A549 (cell line): ENCODE measurements at regions of chr17 and their contacts with region 1.

Region 1: DNA sequence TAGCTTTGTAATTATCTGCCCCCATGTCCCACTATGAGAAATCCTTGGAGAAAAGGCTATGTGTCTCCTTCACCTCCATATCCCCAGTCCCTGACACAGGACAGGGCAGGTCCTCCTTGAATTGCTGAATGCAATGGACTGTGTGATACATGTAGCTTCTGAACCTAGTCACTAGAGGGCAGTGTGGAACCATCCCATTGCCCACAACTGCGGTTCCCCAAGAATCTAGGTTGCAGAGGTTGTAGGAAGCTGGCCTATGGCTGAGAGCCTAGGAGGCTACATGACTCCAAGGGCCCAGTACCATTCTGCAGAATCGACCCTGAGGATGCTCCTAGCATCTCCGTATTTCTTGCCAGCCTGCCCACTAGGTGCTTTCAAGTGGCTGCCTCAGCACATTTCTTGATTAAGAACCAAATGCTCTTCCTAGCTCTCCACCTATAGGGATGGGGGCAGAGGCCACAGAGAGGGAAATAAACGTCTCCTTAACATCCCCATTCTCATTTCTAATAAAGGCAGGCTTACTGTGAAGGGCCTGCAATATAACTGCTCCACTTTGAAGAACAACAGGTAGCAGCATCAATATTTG is 394.0 kb downstream of the CA10 start:
- DNase-seq: peak; percentile 78
- ATAC-seq: peak; percentile 90 to 99
- H3K4me3 ChIP-seq: no peak overlapping the region
- H3K27ac ChIP-seq: no peak overlapping the region
- H3K4me1 ChIP-seq: no peaks in the 10 kb centered on the region
- CTCF ChIP-seq: peak; percentile 89
- EP300 ChIP-seq: no peak
- POLR2A ChIP-seq: no peak
- RAD21 ChIP-seq: peak; percentile 87 to 91

Region 2: DNA sequence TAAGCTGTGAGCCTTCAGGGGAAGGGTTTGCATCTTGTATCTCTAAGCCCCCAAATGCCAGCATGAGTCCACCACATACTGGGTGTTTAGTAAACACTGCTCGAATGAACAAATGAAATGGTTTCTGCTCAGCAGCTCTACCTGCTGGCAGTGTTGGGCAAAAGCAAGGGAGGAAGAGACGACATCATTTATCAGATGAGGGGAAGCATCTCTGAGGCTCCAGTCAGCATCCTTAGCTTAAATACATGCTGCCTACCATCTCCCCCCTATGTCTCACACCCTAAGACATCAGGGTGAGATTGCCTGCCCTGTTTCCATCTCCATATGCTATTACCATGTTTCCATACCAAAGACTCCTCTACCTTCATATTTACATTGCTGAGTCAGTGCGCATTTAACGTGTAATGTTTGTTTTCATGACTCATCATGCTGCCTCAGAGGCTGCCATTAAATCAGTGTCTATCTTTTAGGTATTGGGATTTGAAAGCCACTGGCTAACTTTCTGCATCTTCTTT is 124.3 kb before region 1 on chr17:
- CTCF ChIA-PET with region 1: no interaction called
- POLR2A ChIA-PET with region 1: no interaction called
- DNase-seq: peak; percentile 84 to 85
- ATAC-seq: peak; percentile 87 to 91
- H3K4me3 ChIP-seq: no peak overlapping the region
- H3K27ac ChIP-seq: peak overlapping the region; percentile 41 to 56; a peak in 5 of 6 replicates
- H3K4me1 ChIP-seq: peaks cover 26% of the 10 kb centered on the region
- CTCF ChIP-seq: peak; percentile 55
- EP300 ChIP-seq: no peak
- POLR2A ChIP-seq: no peak
- RAD21 ChIP-seq: peak in 1 of 2 experiments; percentile 37; a peak in 3 of 5 replicates

Region 3: GRCh38 chr17:51653878-51654277 is 110.6 kb before region 1 on chr17:
- CTCF ChIA-PET with region 1: no interaction called
- POLR2A ChIA-PET with region 1: no interaction called
- DNase-seq: peak; percentile 21 to 36
- ATAC-seq: peak; percentile 75 to 87
- H3K4me3 ChIP-seq: no peak overlapping the region
- H3K27ac ChIP-seq: no peak overlapping the region
- H3K4me1 ChIP-seq: no peaks in the 10 kb centered on the region
- CTCF ChIP-seq: no peak
- EP300 ChIP-seq: no peak
- POLR2A ChIP-seq: no peak
- RAD21 ChIP-seq: no peak

Region 4: GRCh38 chr17:51748749-51749539 is 15.5 kb before region 1 on chr17:
- CTCF ChIA-PET with region 1: interaction called, 23 read pairs
- POLR2A ChIA-PET with region 1: no interaction called
- DNase-seq: no peak
- ATAC-seq: no peak
- H3K4me3 ChIP-seq: no peak overlapping the region
- H3K27ac ChIP-seq: no peak overlapping the region
- H3K4me1 ChIP-seq: no peaks in the 10 kb centered on the region
- CTCF ChIP-seq: no peak
- EP300 ChIP-seq: no peak
- POLR2A ChIP-seq: no peak
- RAD21 ChIP-seq: no peak

Region 5: DNA sequence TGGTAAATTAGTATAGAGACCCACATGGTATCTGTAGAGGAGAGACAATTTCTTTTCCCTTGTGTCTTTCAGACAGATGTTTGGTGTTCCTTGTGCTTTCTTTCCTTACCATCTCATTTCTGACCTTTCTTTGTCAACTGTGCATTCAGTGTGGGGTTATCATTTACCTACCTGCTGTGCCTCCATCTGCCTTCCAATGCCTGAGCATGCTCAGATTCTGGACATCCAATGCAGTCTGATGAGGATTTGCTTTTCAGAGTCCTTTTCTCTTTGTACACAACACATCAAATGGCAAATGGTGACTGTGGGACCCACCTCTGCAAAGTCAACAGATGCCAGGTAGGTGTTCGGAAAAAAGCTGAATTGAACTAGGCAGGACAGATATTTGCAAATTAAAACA is 29.2 kb after region 1 on chr17:
- CTCF ChIA-PET with region 1: interaction called, 18 read pairs
- POLR2A ChIA-PET with region 1: no interaction called
- DNase-seq: no peak
- ATAC-seq: no peak
- H3K4me3 ChIP-seq: no peak overlapping the region
- H3K27ac ChIP-seq: no peak overlapping the region
- H3K4me1 ChIP-seq: no peaks in the 10 kb centered on the region
- CTCF ChIP-seq: no peak
- EP300 ChIP-seq: no peak
- POLR2A ChIP-seq: no peak
- RAD21 ChIP-seq: no peak